HepG2 (cell line): ENCODE measurements at regions of chr11 and their contacts with region 1.

Region 1: GRCh38 chr11:2725368-2726300 is 25.8 kb upstream of the KCNQ1OT1 start:
- DNase-seq: peak; percentile 79
- ATAC-seq: peak; percentile 12
- H3K4me3 ChIP-seq: peak overlapping the region; percentile 27 to 60 (median 30); a peak in 5 of 6 replicates
- H3K27ac ChIP-seq: peak overlapping the region; percentile 64
- H3K4me1 ChIP-seq: peaks cover 93% of the 10 kb centered on the region
- H3K27me3 ChIP-seq: peaks cover 2 to 16% of the 10 kb centered on the region in 2 experiments; a peak in 3 of 5 replicates
- CTCF ChIP-seq: no peak
- EP300 ChIP-seq: no peak
- POLR2A ChIP-seq: peak in 1 of 2 experiments; percentile 38; a peak in 2 of 4 replicates
- RAD21 ChIP-seq: no peak

Region 2: DNA sequence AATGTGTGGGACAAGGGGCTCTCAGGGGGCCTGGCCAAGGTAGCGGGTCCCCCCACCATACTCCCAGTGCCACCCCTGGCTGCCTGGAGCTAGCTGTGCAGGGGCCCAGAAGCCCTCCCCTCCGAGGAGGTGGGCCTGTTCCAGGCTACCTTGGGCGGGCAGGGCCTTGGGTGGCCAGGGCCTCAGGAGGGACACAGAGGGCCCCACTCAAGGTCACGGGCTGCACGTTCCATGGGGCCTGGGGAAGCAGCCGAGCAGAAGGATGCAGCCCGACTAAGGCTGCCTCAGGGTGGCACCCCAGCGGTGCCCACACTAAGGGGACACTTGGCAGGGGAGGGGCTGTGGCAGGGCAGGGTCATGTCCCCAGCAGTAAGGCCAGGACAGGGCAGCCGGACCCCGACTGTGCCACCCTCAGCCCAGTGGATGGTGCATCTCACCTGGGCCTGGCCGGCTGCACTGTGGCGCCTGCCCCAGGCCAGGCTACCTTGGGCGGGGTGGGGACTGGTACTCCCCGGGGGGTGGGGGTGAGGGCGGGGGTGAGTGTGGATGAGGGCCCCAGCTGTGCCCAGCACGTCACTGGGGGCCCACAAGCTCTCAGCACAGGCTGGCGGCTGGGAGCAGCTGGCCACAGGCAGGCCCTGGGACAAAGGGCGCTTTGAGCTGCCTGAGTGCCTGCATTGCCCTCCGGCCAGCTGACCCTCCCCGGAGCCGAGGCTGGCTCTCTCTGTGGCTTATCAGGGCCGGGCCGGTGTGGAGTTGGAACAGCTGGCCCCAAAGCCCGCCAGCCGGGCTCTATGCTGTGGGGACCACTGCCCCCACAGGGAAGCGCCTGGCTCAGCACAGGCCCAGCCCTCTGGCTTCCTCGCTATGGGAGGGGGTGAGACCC is 163.7 kb before region 1 on chr11:
- CTCF ChIA-PET with region 1: no interaction called
- POLR2A ChIA-PET with region 1: interaction called, 40 read pairs
- in situ Hi-C with region 1: no loop called
- intact Hi-C with region 1: no loop called
- DNase-seq: peak; percentile 76
- ATAC-seq: peak; percentile 86
- H3K4me3 ChIP-seq: peak overlapping the region in 1 of 3 experiments; percentile 39; a peak in 1 of 6 replicates
- H3K27ac ChIP-seq: peak overlapping the region; percentile 91
- H3K4me1 ChIP-seq: peaks cover 60% of the 10 kb centered on the region
- H3K27me3 ChIP-seq: peaks cover 7 to 26% of the 10 kb centered on the region in 2 experiments; a peak in 4 of 5 replicates
- CTCF ChIP-seq: no peak
- EP300 ChIP-seq: peak in 1 of 2 experiments; percentile 50; a peak in 1 of 4 replicates
- POLR2A ChIP-seq: no peak
- RAD21 ChIP-seq: 0 out of 2 replicates have a peak, but pooled peaks have one; percentile 20

Region 3: DNA sequence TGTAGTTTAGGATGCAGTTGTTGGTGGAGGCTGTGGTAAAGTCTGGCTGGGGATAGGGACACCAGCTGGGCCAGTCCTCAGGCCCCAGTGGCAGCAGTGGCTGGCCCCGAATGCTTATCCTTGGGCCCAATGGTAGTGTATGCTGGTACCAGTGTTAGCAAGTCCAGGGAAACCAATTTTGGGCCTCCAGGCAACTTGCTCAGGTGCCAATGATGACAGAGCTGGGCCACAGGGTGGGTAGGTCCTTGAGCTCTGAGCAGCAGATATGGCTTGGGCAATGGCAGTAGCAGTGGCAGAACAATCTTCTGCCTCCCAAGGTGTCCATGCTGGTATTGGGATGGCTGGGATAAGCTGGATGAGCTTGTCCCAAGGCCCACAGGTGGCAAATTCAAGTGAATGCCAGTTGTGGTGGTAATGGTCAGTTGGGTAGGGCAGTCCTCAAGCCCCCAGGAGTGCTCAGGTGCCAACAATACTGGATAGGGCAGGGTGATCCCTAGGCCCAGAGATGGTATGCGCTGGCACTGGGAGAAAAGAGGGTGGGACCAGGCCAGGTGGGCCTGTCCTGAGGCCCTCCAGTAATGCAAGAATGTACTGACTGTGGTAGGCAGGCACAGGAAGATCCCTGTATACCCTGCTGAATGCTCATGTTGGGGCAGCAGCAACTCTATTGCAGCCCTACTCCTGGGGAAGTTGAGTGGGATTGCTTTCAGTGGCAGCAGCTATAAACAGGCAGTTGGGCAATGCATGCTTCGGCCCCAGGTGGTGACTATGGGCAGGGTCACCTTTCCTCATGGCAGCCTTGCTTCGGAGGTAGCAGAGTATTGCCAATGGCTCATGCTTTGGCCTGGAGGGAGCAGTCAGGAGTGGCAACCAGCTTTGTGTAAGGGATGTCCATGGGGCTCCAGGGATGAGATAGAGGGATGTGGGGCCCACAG is 80.5 kb before region 1 on chr11:
- CTCF ChIA-PET with region 1: no interaction called
- POLR2A ChIA-PET with region 1: no interaction called
- in situ Hi-C with region 1: no loop called
- intact Hi-C with region 1: no loop called
- DNase-seq: no peak
- ATAC-seq: peak; percentile 53
- H3K4me3 ChIP-seq: no peak overlapping the region
- H3K27ac ChIP-seq: no peak overlapping the region
- H3K4me1 ChIP-seq: no peaks in the 10 kb centered on the region
- H3K27me3 ChIP-seq: no peaks in the 10 kb centered on the region
- CTCF ChIP-seq: no peak
- EP300 ChIP-seq: no peak
- POLR2A ChIP-seq: peak; percentile 32 to 34; a peak in 3 of 4 replicates
- RAD21 ChIP-seq: no peak

Region 4: GRCh38 chr11:2699531-2700414 is 25.9 kb before region 1 on chr11 and contains the start of gene KCNQ1OT1:
- CTCF ChIA-PET with region 1: no interaction called
- POLR2A ChIA-PET with region 1: interaction called, 201 read pairs
- in situ Hi-C with region 1: loop called (anchors 5 kb)
- intact Hi-C with region 1: loop called (anchors 1 kb)
- DNase-seq: peak; percentile 95
- ATAC-seq: peak; percentile 90
- H3K4me3 ChIP-seq: peak within 1 kb of the TSS; percentile 95
- H3K27ac ChIP-seq: peak within 1 kb of the TSS; percentile 95
- H3K4me1 ChIP-seq: peaks cover 57% of the 10 kb centered on the region
- H3K27me3 ChIP-seq: peaks cover 0 to 3% of the 10 kb centered on the region in 2 experiments; a peak in 2 of 5 replicates
- CTCF ChIP-seq: peak; percentile 35; the same call in 1 of the 2 replicates
- EP300 ChIP-seq: peak in 1 of 2 experiments; percentile 4; a peak in 1 of 4 replicates
- POLR2A ChIP-seq: peak in 1 of 2 experiments; percentile 99; a peak in 2 of 4 replicates
- RAD21 ChIP-seq: peak; percentile 46; the same call in 1 of the 2 replicates
- total RNA-seq, gene KCNQ1OT1: 2.5 and 18.9 TPM in 2 replicates

Region 5: DNA sequence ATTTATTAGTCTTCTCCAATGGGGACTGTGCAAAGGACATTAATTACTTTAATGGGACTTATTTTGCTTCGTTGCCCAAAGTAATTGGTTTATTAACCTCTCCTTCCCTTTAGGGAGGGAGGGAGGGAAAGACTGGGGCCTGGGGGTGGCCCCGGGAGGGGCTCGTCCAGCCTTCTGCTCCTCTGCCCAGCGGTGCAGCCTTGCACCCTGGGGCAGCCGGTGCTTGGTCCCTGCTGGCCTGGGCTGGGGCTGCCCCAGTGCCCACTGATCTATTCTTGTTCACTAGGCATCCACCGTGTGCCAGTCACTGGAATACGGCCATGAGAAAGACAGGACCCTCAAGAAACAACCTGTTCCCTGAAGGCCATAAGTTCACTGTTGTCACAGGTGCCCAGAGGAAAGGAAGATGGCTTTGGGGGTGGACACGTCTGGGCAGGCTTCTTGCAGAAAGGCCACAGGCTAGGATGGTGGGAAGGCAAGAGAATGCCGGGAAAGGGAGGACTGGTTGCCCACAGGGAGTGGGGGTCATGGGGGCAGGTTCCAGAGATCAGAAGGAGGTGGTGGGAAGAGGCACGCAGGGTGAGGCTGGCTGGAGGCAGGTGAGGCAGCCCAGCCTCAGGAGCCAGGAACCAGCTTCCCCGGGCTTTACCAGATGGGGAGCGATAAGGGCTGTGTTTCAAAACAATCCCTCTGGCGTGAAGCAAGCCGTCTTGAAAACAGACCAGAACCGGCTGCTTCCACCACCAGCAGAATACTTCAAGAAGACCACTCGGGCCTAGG is 21.8 kb after region 1 on chr11:
- CTCF ChIA-PET with region 1: no interaction called
- POLR2A ChIA-PET with region 1: interaction called, 90 read pairs
- in situ Hi-C with region 1: no loop called
- intact Hi-C with region 1: no loop called
- DNase-seq: no peak
- ATAC-seq: no peak
- H3K4me3 ChIP-seq: no peak overlapping the region
- H3K27ac ChIP-seq: no peak overlapping the region
- H3K4me1 ChIP-seq: peaks cover 18% of the 10 kb centered on the region
- H3K27me3 ChIP-seq: peaks cover 12 to 79% of the 10 kb centered on the region in 2 experiments
- CTCF ChIP-seq: no peak
- EP300 ChIP-seq: no peak
- POLR2A ChIP-seq: no peak
- RAD21 ChIP-seq: no peak

Region 6: GRCh38 chr11:2807025-2807681 is 81.5 kb after region 1 on chr11:
- CTCF ChIA-PET with region 1: no interaction called
- POLR2A ChIA-PET with region 1: no interaction called
- in situ Hi-C with region 1: no loop called
- intact Hi-C with region 1: loop called (anchors 2 kb)
- DNase-seq: peak; percentile 27
- ATAC-seq: peak; percentile 52
- H3K4me3 ChIP-seq: peak overlapping the region in 2 of 3 experiments; percentile 34 to 48; a peak in 2 of 6 replicates
- H3K27ac ChIP-seq: no peak overlapping the region
- H3K4me1 ChIP-seq: peaks cover 16% of the 10 kb centered on the region
- H3K27me3 ChIP-seq: peaks cover 18 to 83% of the 10 kb centered on the region in 2 experiments
- CTCF ChIP-seq: no peak
- EP300 ChIP-seq: no peak
- POLR2A ChIP-seq: no peak
- RAD21 ChIP-seq: no peak